CD4-positive, alpha-beta memory T cell (primary cell): ENCODE measurements at regions of chr7 and their contacts with region 1.

Region 1: DNA sequence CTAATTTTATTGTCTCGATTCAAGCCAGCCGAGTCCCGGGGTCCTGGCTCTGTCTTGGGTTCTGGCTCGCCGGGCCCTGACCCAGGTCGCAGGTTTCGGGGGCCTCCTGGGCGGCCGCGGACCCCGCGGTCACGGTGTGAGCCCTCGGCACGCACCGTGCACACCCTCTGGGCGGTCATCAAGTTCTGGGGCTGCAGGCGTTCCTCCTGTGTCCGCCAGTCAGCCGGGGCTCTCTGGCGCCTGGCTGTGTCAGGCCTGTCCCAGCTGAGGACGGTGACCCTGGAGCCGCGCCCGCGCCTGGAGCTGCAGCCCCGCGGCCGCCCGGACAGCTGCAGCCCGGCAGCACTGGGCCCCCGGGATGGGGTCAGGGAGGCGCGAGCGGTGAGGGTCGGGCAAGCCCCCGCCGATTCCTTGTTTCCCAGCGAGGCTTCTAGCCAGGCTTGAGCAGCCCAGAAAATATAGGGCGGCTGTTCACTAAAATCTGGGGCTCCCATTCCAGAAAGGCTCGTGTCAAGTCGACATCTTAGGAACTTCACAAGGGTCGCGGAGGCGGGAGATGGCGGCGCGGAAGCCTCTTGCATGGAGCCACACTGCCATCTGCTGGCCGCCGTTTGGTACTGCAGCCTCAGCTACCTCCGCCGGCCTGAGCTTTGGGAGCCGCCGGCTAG is 4.2 kb upstream of the HOXA7 start:
- DNase-seq: peak; percentile 77 to 84 (median 78)
- H3K4me3 ChIP-seq: peak overlapping the region; percentile 61 to 79
- H3K4me3 Mint-ChIP-seq: peak overlapping the region; percentile 77 to 87 (median 81)
- H3K27ac ChIP-seq: no peak overlapping the region
- H3K27ac Mint-ChIP-seq: peak overlapping the region in 1 of 7 donors; percentile 88
- H3K4me1 ChIP-seq: peaks cover 38% of the 10 kb centered on the region
- H3K4me1 Mint-ChIP-seq: peaks cover 18 to 52% (median 30%) of the 10 kb centered on the region in 4 donors
- H3K27me3 ChIP-seq: peaks cover 80% of the 10 kb centered on the region
- H3K27me3 Mint-ChIP-seq: peaks cover 51 to 68% of the 10 kb centered on the region in 2 donors

Region 2: DNA sequence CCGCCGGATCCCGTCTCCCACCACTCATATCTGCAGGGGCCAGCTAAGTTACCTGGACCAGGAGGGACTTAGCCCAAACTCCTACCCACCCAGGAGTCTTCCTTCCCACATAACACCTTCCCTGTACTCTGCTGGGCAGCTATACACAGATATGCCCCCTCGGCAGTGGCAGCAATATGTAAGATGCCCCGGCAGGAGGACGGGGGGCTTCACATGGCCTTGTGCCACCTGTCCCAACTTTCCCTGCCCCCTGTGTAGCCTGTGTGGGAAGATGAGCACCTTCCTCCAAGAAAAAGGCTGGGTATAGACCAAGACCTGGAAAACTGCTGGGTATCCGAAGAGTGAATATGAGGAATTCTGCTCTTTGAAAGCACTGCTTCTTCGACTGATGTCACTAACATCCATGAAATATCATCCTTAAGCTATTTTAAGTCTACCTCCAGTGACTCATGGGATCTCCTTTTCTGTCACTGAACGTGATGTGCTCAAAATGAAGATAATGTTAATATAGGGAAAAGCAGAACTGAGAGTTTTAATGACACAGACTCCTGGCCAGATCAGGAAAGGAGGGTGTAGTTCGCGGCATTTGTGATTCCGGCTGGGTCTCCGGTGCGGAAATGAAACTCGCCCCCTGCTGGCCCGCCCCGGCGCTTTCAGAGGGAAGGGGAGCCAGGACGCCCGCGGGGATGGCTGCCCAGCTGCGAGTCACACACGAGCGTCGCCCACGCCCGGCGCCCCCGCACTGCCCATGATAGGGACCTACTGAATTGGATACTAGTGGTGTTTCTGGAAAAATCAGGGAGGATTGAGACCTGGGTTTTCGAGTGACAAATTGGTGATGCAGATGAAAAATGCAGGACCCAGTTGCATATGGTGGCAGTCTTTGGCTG is 1265.5 kb before region 1 on chr7:
- CTCF ChIA-PET with region 1: interaction called, 15 read pairs
- POLR2A ChIA-PET with region 1: no interaction called
- intact Hi-C with region 1: loop called (anchors 2 kb)
- DNase-seq: peak; percentile 44 to 60 (median 51)
- H3K4me3 ChIP-seq: no peak overlapping the region
- H3K4me3 Mint-ChIP-seq: peak overlapping the region; percentile 50 to 94 (median 56)
- H3K27ac ChIP-seq: no peak overlapping the region
- H3K27ac Mint-ChIP-seq: peak overlapping the region in 4 of 7 donors; percentile 9 to 77 (median 43)
- H3K4me1 ChIP-seq: peaks cover 26% of the 10 kb centered on the region
- H3K4me1 Mint-ChIP-seq: peaks cover 16 to 24% (median 21%) of the 10 kb centered on the region in 4 donors
- H3K27me3 ChIP-seq: no peaks in the 10 kb centered on the region
- H3K27me3 Mint-ChIP-seq: peaks cover 0 to 3% of the 10 kb centered on the region in 2 donors

Region 3: DNA sequence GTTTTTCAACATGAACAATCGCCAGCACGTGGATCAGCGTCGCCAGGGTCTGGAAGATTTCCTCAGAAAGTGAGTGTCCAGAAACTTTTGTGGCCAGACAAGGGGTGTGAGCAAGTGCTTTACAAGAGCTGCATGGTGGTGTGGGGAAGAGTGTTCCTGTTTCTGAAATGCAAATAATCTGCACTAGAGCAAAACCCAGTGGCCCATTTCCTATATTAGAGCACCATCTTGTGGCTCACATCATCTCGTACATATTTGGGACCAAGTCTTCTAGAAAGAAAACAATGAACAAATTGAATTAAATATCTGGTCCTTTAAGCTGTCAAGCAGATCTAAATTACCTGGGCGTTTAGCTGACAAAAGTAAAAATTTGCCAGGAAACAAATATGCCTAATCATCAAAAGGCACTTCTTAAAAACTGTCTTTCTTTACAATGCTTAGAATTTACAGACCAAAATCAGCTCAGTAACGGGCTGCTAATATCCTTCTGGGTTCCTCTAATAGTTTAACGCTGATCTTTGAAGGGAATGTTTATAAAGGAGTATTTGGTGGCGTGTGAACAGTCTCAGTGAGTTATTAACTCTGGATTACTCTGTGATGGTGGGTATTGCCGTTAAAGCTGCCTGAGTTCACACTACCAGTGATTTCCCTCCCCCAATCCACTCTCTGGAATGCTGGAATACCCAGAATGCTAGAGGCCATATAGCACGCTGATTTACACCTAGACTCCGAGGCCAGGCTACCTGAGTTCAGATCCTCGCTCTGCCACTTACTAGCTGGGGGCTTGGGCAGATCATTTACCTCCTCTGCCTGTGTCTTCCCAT is 795.4 kb before region 1 on chr7:
- CTCF ChIA-PET with region 1: interaction called, 35 read pairs
- POLR2A ChIA-PET with region 1: no interaction called
- intact Hi-C with region 1: loop called (anchors 1 kb)
- DNase-seq: peak; percentile 60 to 67 (median 64)
- H3K4me3 ChIP-seq: no peak overlapping the region
- H3K4me3 Mint-ChIP-seq: no peak overlapping the region
- H3K27ac ChIP-seq: no peak overlapping the region
- H3K27ac Mint-ChIP-seq: peak overlapping the region in 2 of 7 donors; percentile 60 to 65
- H3K4me1 ChIP-seq: peaks cover 8% of the 10 kb centered on the region
- H3K4me1 Mint-ChIP-seq: peaks cover 2 to 8% (median 6%) of the 10 kb centered on the region in 4 donors
- H3K27me3 ChIP-seq: no peaks in the 10 kb centered on the region
- H3K27me3 Mint-ChIP-seq: peaks cover 0 to 2% of the 10 kb centered on the region in 2 donors

Region 4: DNA sequence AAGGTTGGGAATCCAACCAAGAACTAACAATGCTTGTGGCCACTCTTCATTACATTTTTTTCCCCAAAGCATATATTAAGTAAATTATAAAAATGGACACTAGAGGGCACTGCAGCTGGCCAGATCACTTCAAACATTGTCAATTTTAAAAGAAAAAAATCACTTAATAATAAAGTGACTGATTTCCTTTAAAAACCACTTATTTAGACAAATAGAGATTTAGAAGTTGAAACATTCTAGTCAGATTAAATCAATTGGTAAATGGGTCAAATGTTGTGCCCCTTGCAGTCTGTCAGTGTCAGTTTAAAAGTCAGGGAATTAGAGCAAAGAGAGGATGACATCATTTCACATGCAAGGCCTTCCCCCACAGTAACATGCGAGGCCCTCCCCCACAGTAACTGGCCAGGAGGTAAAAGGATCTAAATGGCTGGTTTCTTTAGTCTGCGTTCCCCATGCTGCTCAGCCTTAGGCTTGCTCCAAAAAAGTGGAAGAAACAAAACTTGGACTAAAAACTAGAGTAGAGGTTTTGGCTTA is 474.2 kb before region 1 on chr7:
- CTCF ChIA-PET with region 1: interaction called, 22 read pairs
- POLR2A ChIA-PET with region 1: interaction called, 6 read pairs
- intact Hi-C with region 1: loop called (anchors 1 kb)
- DNase-seq: peak in 4 of 5 donors; percentile 28 to 43 (median 34)
- H3K4me3 ChIP-seq: no peak overlapping the region
- H3K4me3 Mint-ChIP-seq: no peak overlapping the region
- H3K27ac ChIP-seq: no peak overlapping the region
- H3K27ac Mint-ChIP-seq: no peak overlapping the region
- H3K4me1 ChIP-seq: no peaks in the 10 kb centered on the region
- H3K4me1 Mint-ChIP-seq: peaks cover 0 to under 1% (median 0%) of the 10 kb centered on the region in 4 donors
- H3K27me3 ChIP-seq: no peaks in the 10 kb centered on the region
- H3K27me3 Mint-ChIP-seq: peaks cover 10 to 11% of the 10 kb centered on the region in 2 donors

Region 5: DNA sequence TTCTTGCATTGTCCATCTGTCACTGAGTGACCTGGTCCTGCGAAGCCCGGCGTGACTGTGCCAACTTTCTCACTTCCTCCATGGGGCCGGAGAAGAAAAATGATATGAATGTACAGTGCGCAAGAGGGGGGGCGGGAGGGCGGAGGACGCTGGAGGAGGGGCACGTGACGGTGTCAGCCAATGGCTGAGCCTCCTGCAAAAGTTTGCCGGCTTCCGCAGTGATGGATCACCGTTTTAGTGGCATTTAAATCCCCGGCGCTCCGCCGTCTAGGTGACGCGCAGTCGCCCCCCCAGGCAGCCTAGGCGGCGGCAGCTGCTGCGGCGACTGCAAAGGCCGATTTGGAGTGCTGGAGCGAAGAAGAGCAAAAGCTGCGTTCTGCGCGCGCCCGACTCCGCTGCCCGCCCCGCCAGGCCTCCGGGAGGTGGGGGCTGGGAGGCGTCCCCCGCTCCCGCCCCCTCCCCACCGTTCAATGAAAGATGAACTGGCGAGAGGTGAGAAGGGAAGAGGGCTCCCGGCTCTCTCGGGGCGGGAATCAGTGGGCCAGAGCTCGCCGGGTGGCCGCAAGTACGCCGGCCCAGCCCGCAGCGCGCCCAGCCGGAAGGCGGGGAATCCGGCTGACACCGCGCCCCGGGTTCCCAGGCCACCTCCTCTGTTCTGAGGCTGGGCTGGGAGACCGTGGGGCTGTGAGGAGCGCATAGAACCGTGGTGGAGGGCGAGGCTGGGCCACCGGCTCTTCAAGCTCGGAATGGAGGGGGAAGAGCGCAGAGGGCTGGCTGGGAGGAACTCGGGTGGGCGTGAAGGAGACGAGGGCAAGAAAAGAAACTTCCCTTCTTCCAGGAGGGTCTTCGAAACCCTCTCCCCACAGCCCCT is 64.5 kb before region 1 on chr7 and contains the start of gene HOXA1:
- CTCF ChIA-PET with region 1: interaction called, 4 read pairs
- POLR2A ChIA-PET with region 1: no interaction called
- intact Hi-C with region 1: loop called (anchors 5 kb)
- DNase-seq: peak; percentile 71 to 81 (median 74)
- H3K4me3 ChIP-seq: peak within 1 kb of the TSS; percentile 73 to 84
- H3K4me3 Mint-ChIP-seq: peak within 1 kb of the TSS; percentile 86 to 96 (median 93)
- H3K27ac ChIP-seq: peak within 1 kb of the TSS; percentile 36
- H3K27ac Mint-ChIP-seq: peak within 1 kb of the TSS; percentile 67 to 90 (median 87)
- H3K4me1 ChIP-seq: peaks cover 23% of the 10 kb centered on the region
- H3K4me1 Mint-ChIP-seq: peaks cover 11 to 46% (median 28%) of the 10 kb centered on the region in 4 donors
- H3K27me3 ChIP-seq: peaks cover 5% of the 10 kb centered on the region
- H3K27me3 Mint-ChIP-seq: peaks cover 33 to 61% of the 10 kb centered on the region in 2 donors
- total RNA-seq, gene HOXA1: 0.73 to 0.75 TPM

Region 6: DNA sequence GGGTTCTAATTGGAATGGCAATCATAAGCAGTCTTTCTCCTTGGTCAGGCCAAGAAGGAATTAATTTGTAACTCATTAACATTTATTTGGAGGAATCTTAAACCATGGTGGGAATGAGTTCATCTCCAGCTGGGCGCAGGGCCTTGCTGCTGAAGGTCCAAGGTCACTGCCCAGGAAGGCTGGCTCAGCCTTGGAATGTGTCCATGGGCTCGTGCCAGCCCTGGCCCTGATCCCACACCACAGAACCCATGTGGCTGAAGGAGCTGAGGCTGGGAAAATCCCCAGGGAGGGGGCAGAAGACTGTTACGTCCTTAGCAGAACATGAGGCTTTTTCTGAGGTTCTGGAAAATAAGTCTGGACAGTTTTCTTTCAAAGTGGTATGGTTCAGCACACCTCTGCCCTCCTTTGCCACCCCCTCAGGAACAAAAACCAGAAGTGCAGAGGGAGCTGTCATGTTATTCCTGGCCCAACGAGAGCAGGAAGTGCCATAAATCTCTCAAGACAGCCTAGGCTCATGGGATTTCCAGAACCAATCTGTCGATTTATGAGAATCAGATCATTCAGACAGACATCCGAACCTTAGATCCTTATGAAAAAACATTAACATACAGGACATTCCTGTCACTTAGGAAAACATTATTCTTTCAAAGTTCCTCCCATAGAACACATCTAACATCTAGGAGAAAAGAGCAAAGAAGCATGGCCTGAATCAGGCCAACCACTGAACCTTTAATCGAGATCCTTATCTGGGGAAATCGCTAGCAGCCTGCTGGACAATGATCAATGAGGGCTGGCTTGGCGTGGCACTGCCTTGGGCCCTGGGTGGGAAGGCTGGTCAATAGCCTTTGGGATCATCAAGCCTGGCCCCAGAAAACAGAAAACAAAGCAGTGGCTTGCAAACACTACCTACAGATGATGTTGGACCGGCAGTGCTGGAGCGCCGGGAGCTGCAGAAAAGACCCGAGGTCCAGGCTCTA is 713.6 kb after region 1 on chr7:
- CTCF ChIA-PET with region 1: no interaction called
- POLR2A ChIA-PET with region 1: no interaction called
- intact Hi-C with region 1: no loop called
- DNase-seq: no peak
- H3K4me3 ChIP-seq: no peak overlapping the region
- H3K4me3 Mint-ChIP-seq: no peak overlapping the region
- H3K27ac ChIP-seq: no peak overlapping the region
- H3K27ac Mint-ChIP-seq: no peak overlapping the region
- H3K4me1 ChIP-seq: no peaks in the 10 kb centered on the region
- H3K4me1 Mint-ChIP-seq: peaks cover 0 to 3% (median 1%) of the 10 kb centered on the region in 4 donors
- H3K27me3 ChIP-seq: no peaks in the 10 kb centered on the region
- H3K27me3 Mint-ChIP-seq: no peaks in the 10 kb centered on the region